ENCODE measurements at regions of chr3 and their contacts with region 1.

Region 1: DNA sequence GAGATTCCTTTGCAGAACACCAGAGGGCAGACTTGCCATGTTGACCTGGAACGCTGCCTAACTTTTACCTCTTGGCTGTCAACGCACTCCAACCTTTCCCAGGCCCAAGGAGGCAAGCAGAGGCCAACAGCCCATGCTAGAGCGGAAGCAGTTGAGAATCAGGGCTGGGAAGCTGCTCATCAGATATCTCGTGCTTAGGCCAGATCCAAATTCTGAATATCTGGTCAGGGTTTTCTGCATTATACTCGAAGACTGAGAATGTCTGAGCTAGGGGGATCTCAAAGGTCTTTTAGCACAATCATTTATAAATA is 2.5 kb downstream of the XIRP1 start:
- DNase-seq: peak in 1 of 2 donors; percentile 81
- ATAC-seq: peak; percentile 20 to 45 (median 31)
- H3K4me3 ChIP-seq: peak overlapping the region; percentile 75
- H3K27ac ChIP-seq: peak overlapping the region; percentile 91
- H3K4me1 ChIP-seq: peaks cover 45% of the 10 kb centered on the region
- H3K27me3 ChIP-seq: no peaks in the 10 kb centered on the region
- CTCF ChIP-seq: peak; percentile 73

Region 2: GRCh38 chr3:39146984-39147591 is 42.8 kb before region 1 on chr3:
- intact Hi-C with region 1: loop called in 1 of 2 experiments (anchors 1 kb)
- DNase-seq: peak; percentile 91 to 93
- ATAC-seq: peak; percentile 64 to 77 (median 74)
- H3K4me3 ChIP-seq: peak overlapping the region; percentile 93
- H3K27ac ChIP-seq: peak overlapping the region; percentile 99
- H3K4me1 ChIP-seq: peaks cover 72% of the 10 kb centered on the region
- H3K27me3 ChIP-seq: no peaks in the 10 kb centered on the region
- CTCF ChIP-seq: no peak

Region 3: DNA sequence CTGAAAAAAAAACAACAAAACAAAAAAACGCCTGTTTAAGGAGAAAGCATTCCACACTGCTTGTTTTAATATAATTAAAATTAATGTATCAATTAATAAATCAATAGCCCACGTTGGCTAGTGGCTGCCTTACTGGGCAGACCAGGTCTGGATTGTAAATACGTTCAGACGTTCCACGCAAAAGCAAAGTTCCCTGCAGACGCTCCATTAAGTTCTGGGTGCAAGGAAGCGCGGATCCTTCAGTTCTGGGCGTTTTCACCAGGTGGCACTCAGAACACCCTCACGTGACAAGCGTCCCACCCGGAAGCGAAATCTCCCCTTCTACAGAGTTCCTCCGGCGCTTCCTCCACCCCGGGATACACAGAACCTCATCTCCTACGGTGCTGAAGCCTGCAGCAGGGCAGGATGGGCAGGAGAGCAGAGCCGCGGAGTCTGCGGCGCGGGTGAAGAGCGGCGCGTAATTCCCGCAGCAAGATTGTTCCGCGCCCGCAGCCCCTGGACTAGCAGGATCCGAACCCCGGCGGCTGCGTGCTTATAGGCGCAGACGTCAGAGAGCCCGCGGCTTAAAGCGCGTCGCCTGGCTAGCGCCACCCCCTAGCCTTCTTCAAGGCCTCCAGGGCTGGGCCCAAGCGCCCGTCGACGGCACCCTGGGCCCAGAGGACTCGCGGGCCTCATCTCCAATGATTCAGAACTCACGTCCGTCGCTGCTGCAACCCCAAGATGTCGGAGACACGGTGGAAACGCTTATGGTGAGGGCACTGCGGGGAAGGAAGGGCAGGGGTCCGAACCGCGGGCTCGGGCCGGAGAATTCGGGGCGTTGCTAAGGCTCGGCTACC is 193.3 kb after region 1 on chr3 and contains the start of gene SLC25A38:
- intact Hi-C with region 1: loop called in 1 of 2 experiments (anchors 10 kb)
- DNase-seq: peak; percentile 75 to 85
- ATAC-seq: peak; percentile 78 to 83 (median 80)
- H3K4me3 ChIP-seq: peak within 1 kb of the TSS; percentile 84
- H3K27ac ChIP-seq: peak within 1 kb of the TSS; percentile 93
- H3K4me1 ChIP-seq: peaks cover 23% of the 10 kb centered on the region
- H3K27me3 ChIP-seq: no peaks in the 10 kb centered on the region
- CTCF ChIP-seq: peak; percentile 30
- total RNA-seq, gene SLC25A38: 24.9 to 34.8 (median 30.4) TPM

Region 4: GRCh38 chr3:39644176-39644575 is 454.3 kb after region 1 on chr3:
- intact Hi-C with region 1: no loop called
- DNase-seq: no peak
- ATAC-seq: no peak
- H3K4me3 ChIP-seq: no peak overlapping the region
- H3K27ac ChIP-seq: no peak overlapping the region
- H3K4me1 ChIP-seq: no peaks in the 10 kb centered on the region
- H3K27me3 ChIP-seq: no peaks in the 10 kb centered on the region
- CTCF ChIP-seq: no peak